ENCODE measurements at regions of chr19 and their contacts with region 1.

Region 1: DNA sequence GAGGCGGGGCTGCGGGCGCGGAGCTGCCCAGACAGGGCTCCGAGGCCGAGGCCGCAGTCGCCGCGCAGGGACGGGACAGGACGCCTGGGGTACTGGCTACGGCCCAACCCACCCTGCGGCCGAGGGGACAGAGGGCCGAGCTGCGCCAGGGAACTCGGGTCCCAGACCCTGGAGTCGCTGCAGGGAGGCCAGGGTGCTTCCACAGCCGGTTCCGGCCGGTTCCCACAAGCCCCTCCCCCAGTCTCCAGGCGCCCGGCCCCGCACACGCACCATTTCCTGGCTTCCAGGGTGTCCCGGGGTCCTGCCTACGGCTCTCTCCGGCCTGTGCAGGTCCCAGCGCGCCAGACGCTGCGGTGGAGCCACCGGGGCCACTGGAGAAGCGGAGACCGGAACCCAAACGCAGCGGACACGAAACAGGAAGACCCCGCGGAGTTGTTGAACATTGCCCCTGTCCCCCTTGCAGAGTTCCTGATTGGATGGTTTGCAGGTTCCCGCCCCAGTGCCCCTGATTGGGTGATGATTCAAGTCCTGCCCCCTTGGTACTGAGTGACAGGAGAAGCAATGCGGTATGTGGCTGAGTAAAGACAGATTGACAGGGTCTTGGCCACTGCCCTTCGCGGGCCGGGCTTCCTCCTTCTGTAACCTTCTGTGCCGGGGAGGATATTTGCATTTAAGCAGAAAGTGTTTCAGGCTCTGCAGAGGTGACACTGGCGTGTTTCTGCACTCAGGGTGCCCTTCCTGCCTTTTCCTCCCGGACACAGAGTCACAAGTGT is at the start of gene ZNF564:
- DNase-seq: peak; percentile 97
- H3K4me3 ChIP-seq: peak within 1 kb of the TSS; percentile 73 to 95 (median 92)
- H3K27ac ChIP-seq: peak within 1 kb of the TSS; percentile 69
- H3K4me1 ChIP-seq: peaks cover 4% of the 10 kb centered on the region
- H3K27me3 ChIP-seq: no peaks in the 10 kb centered on the region
- CTCF ChIP-seq: no peak
- total RNA-seq, gene ZNF564: 4.3 to 5.5 TPM

Region 2: DNA sequence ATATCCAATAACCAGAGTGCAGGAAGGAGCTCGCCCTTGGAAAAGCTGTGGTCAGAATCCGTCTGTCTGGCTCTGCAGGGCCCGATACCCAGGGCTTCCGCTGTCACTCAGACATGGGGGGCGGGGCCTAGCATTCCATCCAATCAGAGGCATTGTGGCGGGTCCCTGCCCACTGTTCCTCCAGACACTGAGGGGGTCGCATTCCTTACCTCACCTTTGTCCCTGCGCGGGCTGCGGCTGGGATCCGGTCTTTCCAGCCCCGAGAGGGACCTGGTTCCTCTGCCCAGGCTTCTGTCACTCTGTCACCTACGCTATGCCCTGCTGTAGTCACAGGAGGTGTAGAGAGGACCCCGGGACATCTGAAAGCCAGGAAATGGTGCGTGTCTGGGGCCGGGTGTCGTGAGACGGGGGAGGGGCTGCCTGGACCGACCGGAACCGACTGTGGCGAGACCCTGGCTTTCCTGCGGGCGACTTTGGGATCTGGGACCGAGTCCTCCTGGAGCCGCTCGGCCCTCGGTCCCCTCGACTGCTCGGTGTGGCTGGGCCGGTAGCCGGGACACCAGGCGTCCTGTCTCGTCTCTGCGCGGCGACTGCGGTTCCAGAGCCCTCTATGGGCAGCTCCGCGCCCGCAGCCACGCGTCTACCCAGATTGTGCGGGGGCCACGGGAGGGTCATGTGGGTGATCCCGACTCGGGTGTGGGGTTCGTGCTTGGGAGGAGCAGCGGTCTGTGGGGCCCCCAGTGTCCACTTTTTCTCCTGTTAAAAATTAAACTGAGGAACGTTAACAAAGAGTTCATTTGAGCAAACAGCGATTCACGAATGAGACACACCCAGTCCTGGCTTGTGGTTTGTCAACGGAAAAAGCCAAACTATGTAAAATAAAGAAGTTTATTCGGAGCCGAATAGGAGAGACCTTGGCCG is 663.4 kb before region 1 on chr19 and contains the start of gene ZNF69:
- CTCF ChIA-PET with region 1: no interaction called
- dilution Hi-C with region 1: no loop called
- in situ Hi-C with region 1: no loop called
- intact Hi-C with region 1: loop called (anchors 10 kb)
- DNase-seq: peak; percentile 55
- H3K4me3 ChIP-seq: peak within 1 kb of the TSS; percentile 24 to 51 (median 39)
- H3K27ac ChIP-seq: no peak within 1 kb of the TSS
- H3K4me1 ChIP-seq: peaks cover 5% of the 10 kb centered on the region
- H3K27me3 ChIP-seq: no peaks in the 10 kb centered on the region
- CTCF ChIP-seq: peak in 1 of 2 donors; percentile 18
- total RNA-seq, gene ZNF69: 3.4 to 8.5 TPM

Region 3: GRCh38 chr19:12513531-12514061 is 37.6 kb before region 1 on chr19:
- CTCF ChIA-PET with region 1: no interaction called
- dilution Hi-C with region 1: no loop called
- in situ Hi-C with region 1: no loop called
- intact Hi-C with region 1: no loop called
- DNase-seq: no peak
- H3K4me3 ChIP-seq: no peak overlapping the region
- H3K27ac ChIP-seq: no peak overlapping the region
- H3K4me1 ChIP-seq: no peaks in the 10 kb centered on the region
- H3K27me3 ChIP-seq: no peaks in the 10 kb centered on the region
- CTCF ChIP-seq: no peak

Region 4: GRCh38 chr19:12610540-12611360 is 59.5 kb after region 1 on chr19 and contains the starts of genes ZNF490 and ZNF791:
- CTCF ChIA-PET with region 1: no interaction called
- dilution Hi-C with region 1: no loop called
- in situ Hi-C with region 1: no loop called
- intact Hi-C with region 1: loop called (anchors 2 kb)
- DNase-seq: peak; percentile 95
- H3K4me3 ChIP-seq: peak within 1 kb of the TSS; percentile 86 to 91 (median 87)
- H3K27ac ChIP-seq: peak within 1 kb of the TSS; percentile 91
- H3K4me1 ChIP-seq: no peaks in the 10 kb centered on the region
- H3K27me3 ChIP-seq: no peaks in the 10 kb centered on the region
- CTCF ChIP-seq: peak in 1 of 2 donors; percentile 13
- total RNA-seq, gene ZNF490: 6.5 to 8.3 TPM
- total RNA-seq, gene ZNF791: 15.3 to 18.6 TPM

Region 5: DNA sequence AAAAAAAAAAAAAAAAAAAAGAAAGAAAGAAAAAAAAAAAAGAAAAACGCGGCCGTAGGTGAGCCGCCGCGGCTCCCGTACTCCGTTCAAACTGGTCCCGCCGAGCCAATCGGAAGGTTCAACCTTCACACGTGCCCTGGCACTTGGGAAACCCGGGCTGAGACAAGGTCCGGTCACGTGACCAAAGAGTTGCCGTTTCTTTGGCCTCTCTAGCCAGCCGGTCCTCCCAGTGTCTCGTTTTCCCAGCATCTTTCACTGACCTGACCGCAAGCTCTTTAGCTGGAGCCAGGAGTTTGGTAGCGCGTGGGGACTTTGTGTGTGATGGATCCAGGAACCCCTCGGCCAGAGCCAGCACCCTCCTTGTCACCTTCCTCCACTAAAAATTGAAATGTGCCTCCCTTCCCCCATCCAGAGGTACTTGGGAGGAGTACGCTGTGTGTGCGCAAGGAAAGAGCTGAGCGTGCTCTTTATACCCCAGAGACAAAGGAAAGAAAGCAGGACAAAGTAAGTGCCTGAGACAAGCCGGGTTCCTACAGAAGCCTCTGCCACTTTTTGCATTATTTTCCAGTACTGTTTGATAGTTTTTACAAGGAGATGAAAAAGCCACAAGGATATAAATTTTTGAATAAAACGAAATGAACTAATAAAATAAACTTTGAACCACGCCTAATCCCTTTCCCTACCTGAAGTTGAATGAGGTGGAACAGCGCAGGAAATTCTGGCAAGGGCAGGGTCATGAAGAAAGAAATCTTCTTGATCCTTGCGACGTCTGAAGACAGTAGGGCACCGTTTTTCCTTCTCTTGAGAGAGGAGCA is 171.5 kb after region 1 on chr19:
- CTCF ChIA-PET with region 1: no interaction called
- dilution Hi-C with region 1: no loop called
- in situ Hi-C with region 1: no loop called
- intact Hi-C with region 1: no loop called
- DNase-seq: peak; percentile 98
- H3K4me3 ChIP-seq: peak overlapping the region; percentile 79 to 95 (median 81)
- H3K27ac ChIP-seq: peak overlapping the region; percentile 81
- H3K4me1 ChIP-seq: peaks cover 34% of the 10 kb centered on the region
- H3K27me3 ChIP-seq: no peaks in the 10 kb centered on the region
- CTCF ChIP-seq: no peak